Activated CD4-positive, alpha-beta T cell treated with anti-CD3 and anti-CD28 coated beads, Interleukin-2, amount 10 ng/mL, durations not matched to agents 24 days and 14 days (primary cell): ENCODE measurements at regions of chr6 and their contacts with region 1.

Region 1: GRCh38 chr6:36735110-36736071 is 37.8 kb downstream of the RAB44 start:
- DNase-seq: peak; percentile 83
- H3K4me3 Mint-ChIP-seq: peak overlapping the region; percentile 75
- H3K27ac Mint-ChIP-seq: peak overlapping the region; percentile 92
- H3K4me1 Mint-ChIP-seq: peaks cover 23% of the 10 kb centered on the region
- H3K27me3 Mint-ChIP-seq: no peaks in the 10 kb centered on the region

Region 2: DNA sequence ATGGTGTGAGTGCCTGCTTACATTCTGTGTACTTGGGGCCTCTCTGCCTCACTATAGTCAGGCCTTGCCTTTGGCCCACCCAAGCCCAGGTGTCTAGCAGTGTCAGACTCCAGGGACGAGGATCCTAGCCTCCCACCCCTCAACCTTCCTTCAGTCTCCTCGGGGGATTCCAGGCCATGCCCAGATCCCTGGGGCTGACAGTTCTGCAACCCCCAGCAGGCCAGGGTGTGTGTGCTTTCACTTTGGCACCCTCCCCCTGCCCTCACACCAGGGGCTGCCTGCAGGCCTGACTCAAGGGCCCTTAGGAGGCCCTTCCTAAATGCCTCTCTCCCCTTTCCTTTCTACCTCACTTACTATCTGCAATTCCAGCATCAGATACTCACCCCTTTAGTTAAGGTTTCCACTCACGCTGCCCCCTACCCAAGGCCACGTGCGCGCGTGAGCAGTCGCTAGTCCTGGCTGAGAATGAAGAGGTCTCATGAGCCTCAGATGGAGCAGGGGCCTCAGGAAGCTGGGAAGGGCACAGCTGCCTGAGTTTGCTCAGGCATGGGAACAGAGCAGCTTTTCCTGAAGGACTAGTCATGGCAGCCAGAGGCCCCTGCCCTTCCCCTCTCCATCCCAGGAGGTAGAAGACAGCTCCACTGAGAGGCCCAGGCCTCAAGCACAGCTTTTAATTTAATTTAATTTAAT is 937.4 kb before region 1 on chr6:
- intact Hi-C with region 1: no loop called
- DNase-seq: no peak
- H3K4me3 Mint-ChIP-seq: no peak overlapping the region
- H3K27ac Mint-ChIP-seq: no peak overlapping the region
- H3K4me1 Mint-ChIP-seq: no peaks in the 10 kb centered on the region
- H3K27me3 Mint-ChIP-seq: no peaks in the 10 kb centered on the region

Region 3: DNA sequence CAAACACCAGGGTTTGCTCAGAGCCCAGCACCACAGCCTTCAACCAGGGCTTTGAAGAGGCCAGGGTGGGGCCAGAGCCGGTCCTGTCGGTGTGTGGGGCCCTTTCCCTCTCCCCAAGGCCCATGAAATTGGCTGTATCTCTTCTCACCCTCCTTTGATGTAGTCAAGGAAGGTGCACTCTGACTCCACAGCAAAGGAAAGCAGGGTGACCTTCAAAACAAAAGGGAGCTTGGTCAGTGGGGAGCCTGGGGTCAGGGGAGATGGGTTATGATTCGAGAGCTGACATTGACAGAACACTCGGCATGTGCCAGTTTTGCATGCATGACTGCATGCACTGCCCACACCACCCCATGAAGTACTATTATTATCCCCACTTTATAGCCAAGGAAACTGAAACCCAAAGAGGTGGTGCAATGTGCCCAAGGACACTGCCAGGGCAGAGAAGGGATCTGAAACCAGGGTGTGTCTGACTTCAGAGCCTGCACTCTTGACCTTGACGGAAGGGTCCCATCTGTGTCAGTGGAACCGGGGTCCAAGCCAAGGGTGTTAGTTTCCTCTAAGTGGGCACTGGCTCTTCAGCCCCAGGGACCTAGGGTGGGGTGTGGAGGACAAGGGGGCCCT is 17.6 kb after region 1 on chr6:
- intact Hi-C with region 1: loop called (anchors 1 kb)
- DNase-seq: peak; percentile 66
- H3K4me3 Mint-ChIP-seq: no peak overlapping the region
- H3K27ac Mint-ChIP-seq: peak overlapping the region; percentile 92
- H3K4me1 Mint-ChIP-seq: peaks cover 60% of the 10 kb centered on the region
- H3K27me3 Mint-ChIP-seq: no peaks in the 10 kb centered on the region